ENCODE measurements at regions of chr15 and their contacts with region 1.

Region 1: GRCh38 chr15:69703532-69704187 is 251.0 kb downstream of the RPLP1 start:
- DNase-seq: peak; percentile 79
- H3K4me3 ChIP-seq: no peak overlapping the region
- H3K27ac ChIP-seq: no peak overlapping the region
- H3K4me1 ChIP-seq: no peaks in the 10 kb centered on the region
- H3K27me3 ChIP-seq: no peaks in the 10 kb centered on the region
- CTCF ChIP-seq: no peak
- POLR2A ChIP-seq: no peak

Region 2: DNA sequence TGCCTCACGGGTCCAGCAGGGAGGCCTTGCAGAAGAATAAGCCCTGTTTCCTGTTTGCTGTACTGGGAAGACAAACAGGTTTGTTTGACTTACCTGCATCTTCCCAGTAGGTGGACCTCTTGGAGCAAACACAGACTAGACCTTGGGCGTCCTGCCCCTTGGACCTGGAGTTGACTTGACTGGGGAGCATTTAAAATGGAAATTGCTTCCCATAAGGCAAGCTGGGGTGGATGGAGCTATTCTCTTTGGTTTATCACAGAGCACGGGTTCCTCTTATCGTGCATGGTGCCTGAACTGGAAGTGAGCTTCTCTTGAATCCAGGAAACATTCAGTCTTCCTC is 99.6 kb before region 1 on chr15:
- intact Hi-C with region 1: no loop called
- DNase-seq: peak; percentile 77
- H3K4me3 ChIP-seq: no peak overlapping the region
- H3K27ac ChIP-seq: peak overlapping the region in 1 of 2 donors; percentile 57
- H3K4me1 ChIP-seq: no peaks in the 10 kb centered on the region
- H3K27me3 ChIP-seq: no peaks in the 10 kb centered on the region
- CTCF ChIP-seq: peak in 3 of 4 experiments; percentile 41 to 66 (median 50)
- POLR2A ChIP-seq: no peak

Region 3: GRCh38 chr15:69794645-69795461 is 91.2 kb after region 1 on chr15:
- intact Hi-C with region 1: loop called (anchors 10 kb)
- DNase-seq: no peak
- H3K4me3 ChIP-seq: no peak overlapping the region
- H3K27ac ChIP-seq: peak overlapping the region in 1 of 2 donors; percentile 4
- H3K4me1 ChIP-seq: no peaks in the 10 kb centered on the region
- H3K27me3 ChIP-seq: no peaks in the 10 kb centered on the region
- CTCF ChIP-seq: no peak
- POLR2A ChIP-seq: no peak

Region 4: GRCh38 chr15:70196314-70197291 is 492.9 kb after region 1 on chr15:
- intact Hi-C with region 1: loop called (anchors 10 kb)
- DNase-seq: peak; percentile 96
- H3K4me3 ChIP-seq: no peak overlapping the region
- H3K27ac ChIP-seq: peak overlapping the region; percentile 70 to 78
- H3K4me1 ChIP-seq: no peaks in the 10 kb centered on the region
- H3K27me3 ChIP-seq: no peaks in the 10 kb centered on the region
- CTCF ChIP-seq: peak in 1 of 4 experiments; percentile 35
- POLR2A ChIP-seq: peak; percentile 50

Region 5: GRCh38 chr15:70318594-70319465 is 615.2 kb after region 1 on chr15:
- intact Hi-C with region 1: loop called (anchors 5 kb)
- DNase-seq: peak; percentile 48
- H3K4me3 ChIP-seq: no peak overlapping the region
- H3K27ac ChIP-seq: peak overlapping the region; percentile 24 to 38
- H3K4me1 ChIP-seq: peaks cover 23% of the 10 kb centered on the region
- H3K27me3 ChIP-seq: no peaks in the 10 kb centered on the region
- CTCF ChIP-seq: no peak
- POLR2A ChIP-seq: no peak